Calu3 (cell line): ENCODE measurements at regions of chr4 and their contacts with region 1.

Region 1: GRCh38 chr4:1777822-1778641 is 15.1 kb upstream of the FGFR3 start:
- DNase-seq: peak; percentile 64
- H3K4me3 Mint-ChIP-seq: no peak overlapping the region
- H3K27ac Mint-ChIP-seq: no peak overlapping the region
- H3K4me1 Mint-ChIP-seq: peaks cover 9% of the 10 kb centered on the region
- H3K27me3 Mint-ChIP-seq: no peaks in the 10 kb centered on the region
- CTCF ChIP-seq: no peak

Region 2: DNA sequence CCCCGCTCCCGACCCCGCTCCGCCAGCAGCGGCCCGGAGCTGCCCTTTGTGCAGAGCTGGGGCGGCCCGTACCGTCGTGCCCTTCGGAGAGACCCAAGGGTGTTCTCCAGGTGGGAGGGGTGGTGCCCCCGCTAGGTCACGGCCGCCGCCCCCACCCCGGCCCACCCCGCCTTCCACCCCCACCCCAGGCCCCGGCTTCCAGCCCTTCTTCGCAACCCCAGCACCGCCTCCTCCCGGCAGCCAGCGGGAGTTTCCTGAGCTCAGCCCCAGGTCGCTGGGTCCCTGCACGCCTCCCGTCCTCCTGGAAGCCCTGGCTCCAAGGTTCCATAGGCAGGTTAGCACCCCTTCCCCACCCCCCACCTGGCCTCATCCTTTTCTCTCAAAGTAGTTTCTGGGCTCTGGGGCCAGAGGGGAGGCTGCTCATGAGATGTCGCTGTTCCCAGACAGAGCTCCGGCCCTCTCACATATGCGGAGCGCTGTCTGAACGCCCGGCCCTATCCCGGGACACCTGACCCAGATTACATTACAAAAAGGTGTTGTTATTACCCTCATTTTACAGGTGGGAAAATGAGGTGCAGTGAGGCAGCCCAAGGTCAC is 10.2 kb before region 1 on chr4:
- CTCF ChIA-PET with region 1: interaction called, 20 read pairs
- intact Hi-C with region 1: no loop called
- DNase-seq: peak; percentile 75
- H3K4me3 Mint-ChIP-seq: peak overlapping the region; percentile 62
- H3K27ac Mint-ChIP-seq: no peak overlapping the region
- H3K4me1 Mint-ChIP-seq: peaks cover 14% of the 10 kb centered on the region
- H3K27me3 Mint-ChIP-seq: no peaks in the 10 kb centered on the region
- CTCF ChIP-seq: no peak